ENCODE measurements at regions of chr11 and their contacts with region 1.

Region 1: GRCh38 chr11:6667733-6668374 is 12.2 kb upstream of the DCHS1 start:
- DNase-seq: peak in 6 of 10 donors; percentile 20 to 55 (median 39)
- ATAC-seq: peak; percentile 74 to 76
- H3K4me3 Mint-ChIP-seq: peak overlapping the region in 5 of 10 donors; percentile 19 to 54 (median 28)
- H3K27ac Mint-ChIP-seq: peak overlapping the region; percentile 6 to 93 (median 66)
- H3K4me1 Mint-ChIP-seq: peaks cover 42 to 70% (median 66%) of the 10 kb centered on the region in 4 donors
- H3K27me3 Mint-ChIP-seq: no peaks in the 10 kb centered on the region

Region 2: GRCh38 chr11:6603287-6604080 is 64.4 kb before region 1 on chr11 and contains the starts of genes ILK and RRP8:
- POLR2A ChIA-PET with region 1: interaction called, 15 read pairs
- DNase-seq: peak; percentile 68 to 92 (median 80)
- ATAC-seq: peak; percentile 80 to 85
- H3K4me3 Mint-ChIP-seq: no peak within 1 kb of the TSS
- H3K27ac Mint-ChIP-seq: no peak within 1 kb of the TSS
- H3K4me1 Mint-ChIP-seq: peaks cover 16 to 33% (median 29%) of the 10 kb centered on the region in 4 donors
- H3K27me3 Mint-ChIP-seq: no peaks in the 10 kb centered on the region
- polyA plus RNA-seq, gene ILK: 63.7 to 72.5 (median 68.5) TPM
- polyA plus RNA-seq, gene RRP8: 17.8 to 25.9 (median 20.9) TPM

Region 3: DNA sequence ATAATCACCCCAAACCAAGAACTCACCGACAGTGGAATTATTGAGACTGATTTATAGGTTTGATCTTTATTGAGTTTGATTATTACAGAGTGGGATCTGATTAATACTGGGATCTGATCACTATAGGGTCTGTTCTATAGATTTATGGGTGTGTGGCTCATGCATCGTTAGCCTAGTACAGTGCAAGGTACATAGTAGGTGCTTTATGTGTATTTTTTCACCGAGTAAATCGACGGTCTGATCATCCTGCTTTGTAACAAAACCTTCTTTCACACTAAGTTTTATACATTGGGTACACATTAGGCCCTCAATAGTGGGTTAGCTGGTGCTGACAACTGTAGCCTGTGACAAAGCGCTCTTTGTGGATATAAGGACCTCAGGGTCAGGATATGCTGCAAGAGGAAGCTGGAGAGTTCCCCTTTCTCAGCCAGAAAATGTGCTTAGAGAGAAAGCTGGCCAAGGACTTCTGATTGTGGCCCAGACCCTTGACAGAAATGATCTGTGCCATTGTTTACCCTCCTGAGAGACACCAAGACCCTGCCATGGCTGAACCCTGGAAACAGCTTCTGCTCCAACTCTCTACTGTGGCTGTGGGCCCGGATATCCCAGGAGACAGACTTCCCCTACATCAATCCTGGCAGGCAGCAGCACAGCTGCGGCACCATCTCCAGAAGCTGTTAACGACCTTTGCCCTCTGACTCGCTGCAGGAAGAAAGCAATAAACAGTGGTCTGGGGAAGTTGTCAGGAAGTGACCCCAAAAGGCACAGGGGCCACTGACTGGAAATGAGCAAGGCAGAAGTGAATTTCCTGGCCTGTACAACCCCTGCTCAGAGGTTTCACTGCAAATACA is 32.5 kb before region 1 on chr11:
- POLR2A ChIA-PET with region 1: no interaction called
- DNase-seq: no peak
- ATAC-seq: no peak
- H3K4me3 Mint-ChIP-seq: no peak overlapping the region
- H3K27ac Mint-ChIP-seq: peak overlapping the region in 2 of 10 donors; percentile 21 to 46
- H3K4me1 Mint-ChIP-seq: peaks cover 2 to 18% (median 6%) of the 10 kb centered on the region in 4 donors
- H3K27me3 Mint-ChIP-seq: no peaks in the 10 kb centered on the region